PC-9 (cell line): ENCODE measurements at regions of chr4 and their contacts with region 1.

Region 1: DNA sequence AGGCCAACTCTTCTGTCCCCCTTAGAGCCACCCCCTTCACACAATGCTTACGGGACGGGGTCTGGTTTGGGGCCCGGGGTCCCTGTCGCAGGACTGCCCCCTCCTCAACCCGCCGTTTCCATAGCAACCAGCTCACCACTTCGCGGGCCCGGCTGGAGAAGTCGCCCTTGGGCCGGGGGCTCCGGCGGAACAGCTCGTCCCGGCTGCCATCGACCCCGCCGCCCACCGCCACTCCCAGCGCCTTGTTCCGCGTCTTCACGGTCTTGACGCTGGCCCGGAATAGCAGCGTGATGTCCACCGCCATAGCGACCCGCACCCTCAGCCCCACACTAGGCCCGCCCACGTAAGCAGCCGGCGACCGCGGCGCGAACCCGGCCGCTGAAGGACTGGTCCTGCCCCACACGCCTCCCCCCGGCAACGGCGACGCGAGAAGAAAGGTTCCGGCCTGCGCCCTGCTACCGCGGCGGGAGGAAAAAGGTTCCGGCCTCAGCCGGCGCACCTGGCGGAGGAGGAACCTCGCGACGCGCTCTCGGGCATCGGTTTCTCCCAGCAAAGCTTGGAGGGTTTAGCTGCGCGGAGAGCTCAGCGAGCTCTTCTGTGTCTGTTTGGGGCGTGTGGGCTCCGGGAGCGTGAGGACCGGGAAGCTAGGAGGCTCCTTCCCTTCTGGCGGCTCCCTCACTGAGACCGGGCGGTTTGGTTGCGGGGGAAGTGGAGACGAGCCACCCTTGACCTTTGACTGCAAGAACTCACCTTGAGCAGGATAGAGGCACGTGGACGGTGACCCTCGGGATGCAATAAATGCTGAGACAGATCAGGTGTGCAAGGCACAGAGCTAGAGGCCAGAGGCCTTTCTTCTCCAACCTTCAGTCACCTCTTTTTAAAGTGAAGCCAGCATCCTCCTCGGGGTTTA is at the start of gene STX18:
- DNase-seq: peak; percentile 67 to 85
- H3K4me3 ChIP-seq: peak within 1 kb of the TSS; percentile 92
- H3K27ac ChIP-seq: peak within 1 kb of the TSS; percentile 65
- H3K4me1 ChIP-seq: peaks cover 15% of the 10 kb centered on the region
- H3K27me3 ChIP-seq: no peaks in the 10 kb centered on the region
- CTCF ChIP-seq: no peak
- total RNA-seq, gene STX18: 25.3 and 30.5 TPM in 2 replicates

Region 2: GRCh38 chr4:4555916-4556315 is 14.0 kb after region 1 on chr4:
- CTCF ChIA-PET with region 1: no interaction called
- POLR2A ChIA-PET with region 1: interaction called, 3 read pairs
- intact Hi-C with region 1: loop called (anchors 1 kb)
- DNase-seq: peak; percentile 18 to 77
- H3K4me3 ChIP-seq: no peak overlapping the region
- H3K27ac ChIP-seq: no peak overlapping the region
- H3K4me1 ChIP-seq: peaks cover 25% of the 10 kb centered on the region
- H3K27me3 ChIP-seq: no peaks in the 10 kb centered on the region
- CTCF ChIP-seq: no peak

Region 3: GRCh38 chr4:4575273-4576211 is 33.6 kb after region 1 on chr4:
- CTCF ChIA-PET with region 1: no interaction called
- POLR2A ChIA-PET with region 1: no interaction called
- intact Hi-C with region 1: loop called (anchors 2 kb)
- DNase-seq: peak; percentile 49 to 77
- H3K4me3 ChIP-seq: peak overlapping the region; percentile 66
- H3K27ac ChIP-seq: no peak overlapping the region
- H3K4me1 ChIP-seq: no peaks in the 10 kb centered on the region
- H3K27me3 ChIP-seq: no peaks in the 10 kb centered on the region
- CTCF ChIP-seq: no peak

Region 4: GRCh38 chr4:4640692-4641091 is 98.8 kb after region 1 on chr4:
- CTCF ChIA-PET with region 1: no interaction called
- POLR2A ChIA-PET with region 1: no interaction called
- intact Hi-C with region 1: no loop called
- DNase-seq: no peak
- H3K4me3 ChIP-seq: no peak overlapping the region
- H3K27ac ChIP-seq: no peak overlapping the region
- H3K4me1 ChIP-seq: no peaks in the 10 kb centered on the region
- H3K27me3 ChIP-seq: no peaks in the 10 kb centered on the region
- CTCF ChIP-seq: no peak